Gastrocnemius medialis (tissue), 4 donors: ENCODE measurements at regions of chr3 and their contacts with region 1.

Region 1: GRCh38 chr3:155232605-155233004 is 60.9 kb downstream of the STRIT1 start:
- DNase-seq: peak; percentile 90 to 97
- ATAC-seq: peak; percentile 91 to 94
- H3K4me3 ChIP-seq: peak overlapping the region in 2 of 4 donors; percentile 9 to 16
- H3K27ac ChIP-seq: peak overlapping the region; percentile 93 to 98 (median 94)
- H3K4me1 ChIP-seq: peaks cover 18 to 22% of the 10 kb centered on the region in 2 donors
- H3K27me3 ChIP-seq: no peaks in the 10 kb centered on the region
- CTCF ChIP-seq: no peak
- POLR2A ChIP-seq: no peak

Region 2: GRCh38 chr3:154323891-154324738 is 908.5 kb before region 1 on chr3 and contains the start of gene DHX36:
- in situ Hi-C with region 1: no loop called
- intact Hi-C with region 1: loop called (anchors 10 kb)
- DNase-seq: peak; percentile 82 to 84
- ATAC-seq: peak; percentile 85 to 93
- H3K4me3 ChIP-seq: peak within 1 kb of the TSS; percentile 86 to 96 (median 89)
- H3K27ac ChIP-seq: peak within 1 kb of the TSS; percentile 89 to 97 (median 93)
- H3K4me1 ChIP-seq: peaks cover 33 to 47% of the 10 kb centered on the region in 2 donors
- H3K27me3 ChIP-seq: no peaks in the 10 kb centered on the region
- CTCF ChIP-seq: no peak
- POLR2A ChIP-seq: peak; percentile 72 to 81
- total RNA-seq, gene DHX36: 59.0 to 211 (median 143) TPM

Region 3: GRCh38 chr3:154779571-154779970 is 453.0 kb before region 1 on chr3:
- in situ Hi-C with region 1: no loop called
- intact Hi-C with region 1: loop called (anchors 10 kb)
- DNase-seq: no peak
- ATAC-seq: no peak
- H3K4me3 ChIP-seq: no peak overlapping the region
- H3K27ac ChIP-seq: no peak overlapping the region
- H3K4me1 ChIP-seq: peaks cover 8 to 24% of the 10 kb centered on the region in 2 donors
- H3K27me3 ChIP-seq: no peaks in the 10 kb centered on the region
- CTCF ChIP-seq: no peak
- POLR2A ChIP-seq: no peak

Region 4: GRCh38 chr3:154992655-154993054 is 239.9 kb before region 1 on chr3:
- in situ Hi-C with region 1: no loop called
- intact Hi-C with region 1: no loop called
- DNase-seq: no peak
- ATAC-seq: no peak
- H3K4me3 ChIP-seq: no peak overlapping the region
- H3K27ac ChIP-seq: no peak overlapping the region
- H3K4me1 ChIP-seq: no peaks in the 10 kb centered on the region
- H3K27me3 ChIP-seq: no peaks in the 10 kb centered on the region
- CTCF ChIP-seq: no peak
- POLR2A ChIP-seq: no peak

Region 5: GRCh38 chr3:155065537-155065936 is 167.1 kb before region 1 on chr3:
- in situ Hi-C with region 1: no loop called
- intact Hi-C with region 1: loop called (anchors 1 kb)
- DNase-seq: peak; percentile 76 to 87
- ATAC-seq: peak; percentile 96
- H3K4me3 ChIP-seq: no peak overlapping the region
- H3K27ac ChIP-seq: peak overlapping the region; percentile 59 to 91 (median 82)
- H3K4me1 ChIP-seq: peaks cover 7 to 20% of the 10 kb centered on the region in 2 donors
- H3K27me3 ChIP-seq: no peaks in the 10 kb centered on the region
- CTCF ChIP-seq: no peak
- POLR2A ChIP-seq: no peak

Region 6: GRCh38 chr3:155196131-155197021 is 36.2 kb before region 1 on chr3:
- in situ Hi-C with region 1: loop called in 1 of 4 experiments (anchors 5 kb)
- intact Hi-C with region 1: loop called (anchors 1 kb)
- DNase-seq: peak; percentile 29 to 37
- ATAC-seq: peak in 1 of 2 donors; percentile 37
- H3K4me3 ChIP-seq: no peak overlapping the region
- H3K27ac ChIP-seq: peak overlapping the region; percentile 92 to 93 (median 92)
- H3K4me1 ChIP-seq: peaks cover 51 to 52% of the 10 kb centered on the region in 2 donors
- H3K27me3 ChIP-seq: no peaks in the 10 kb centered on the region
- CTCF ChIP-seq: no peak
- POLR2A ChIP-seq: no peak

Region 7: GRCh38 chr3:155244216-155244615 is 11.6 kb after region 1 on chr3:
- in situ Hi-C with region 1: no loop called
- intact Hi-C with region 1: no loop called
- DNase-seq: no peak
- ATAC-seq: no peak
- H3K4me3 ChIP-seq: no peak overlapping the region
- H3K27ac ChIP-seq: peak overlapping the region in 3 of 4 donors; percentile 7 to 47 (median 34)
- H3K4me1 ChIP-seq: peaks cover 16 to 32% of the 10 kb centered on the region in 2 donors
- H3K27me3 ChIP-seq: no peaks in the 10 kb centered on the region
- CTCF ChIP-seq: no peak
- POLR2A ChIP-seq: no peak

Region 8: GRCh38 chr3:155292133-155292532 is 59.5 kb after region 1 on chr3:
- in situ Hi-C with region 1: no loop called
- intact Hi-C with region 1: loop called (anchors 1 kb)
- DNase-seq: no peak
- ATAC-seq: peak; percentile 60 to 78
- H3K4me3 ChIP-seq: peak overlapping the region; percentile 41 to 62 (median 50)
- H3K27ac ChIP-seq: peak overlapping the region; percentile 79 to 91 (median 86)
- H3K4me1 ChIP-seq: peaks cover 0 to 5% of the 10 kb centered on the region in 2 donors
- H3K27me3 ChIP-seq: no peaks in the 10 kb centered on the region
- CTCF ChIP-seq: no peak
- POLR2A ChIP-seq: no peak

Region 9: GRCh38 chr3:155854141-155854940 is 621.7 kb after region 1 on chr3 and contains the start of gene SLC33A1:
- in situ Hi-C with region 1: no loop called
- intact Hi-C with region 1: loop called (anchors 1 kb)
- DNase-seq: peak; percentile 99
- ATAC-seq: peak; percentile 96 to 97
- H3K4me3 ChIP-seq: peak within 1 kb of the TSS; percentile 75 to 99 (median 87)
- H3K27ac ChIP-seq: peak within 1 kb of the TSS; percentile 95 to 96 (median 95)
- H3K4me1 ChIP-seq: peaks cover 36 to 37% of the 10 kb centered on the region in 2 donors
- H3K27me3 ChIP-seq: no peaks in the 10 kb centered on the region
- CTCF ChIP-seq: peak in 3 of 5 experiments; percentile 7 to 55 (median 30)
- POLR2A ChIP-seq: peak; percentile 67 to 75
- total RNA-seq, gene SLC33A1: 7.0 to 9.3 (median 8.2) TPM